Head of caudate nucleus (tissue), 42 donors: ENCODE measurements at regions of chr4 and their contacts with region 1.

Region 1: DNA sequence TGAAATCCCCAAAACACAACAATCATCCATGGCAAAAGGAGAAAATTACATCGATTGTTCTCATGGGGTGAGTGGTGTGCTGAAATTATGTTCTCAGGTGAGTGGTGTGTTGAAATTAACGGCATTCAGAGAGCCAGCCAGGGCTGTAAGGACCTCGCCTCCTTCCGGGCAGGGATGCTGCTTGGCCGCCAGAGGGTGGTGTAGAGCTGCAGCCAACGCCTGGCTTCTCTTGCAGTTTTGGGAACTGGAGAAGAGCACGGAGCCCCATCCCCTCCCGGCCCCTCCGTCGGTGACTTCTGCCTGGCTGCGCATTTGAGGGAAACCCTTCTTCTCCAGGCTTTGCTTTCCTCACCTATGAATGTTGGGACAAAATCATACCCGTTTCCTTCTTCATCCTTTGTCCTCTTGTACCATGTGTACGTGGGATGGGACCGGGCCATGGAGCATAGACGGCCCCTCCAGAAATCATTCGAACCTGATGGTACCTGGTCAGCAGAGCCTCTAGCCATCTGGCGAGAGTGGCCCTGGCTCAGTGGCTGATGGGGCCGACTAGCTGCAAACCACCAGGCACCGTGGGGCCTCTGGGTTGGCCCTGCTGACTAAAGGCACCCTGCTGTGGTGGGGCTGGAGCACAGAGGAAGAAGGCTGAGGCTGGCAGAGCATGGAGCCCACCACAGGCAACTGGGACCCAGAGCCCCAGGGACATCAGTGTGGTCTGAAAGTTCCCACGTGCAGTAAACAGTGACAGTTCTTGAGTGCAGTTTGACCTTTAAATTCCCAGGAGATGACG is 28.4 kb downstream of the TRMT44 start:
- DNase-seq: peak; percentile 58 to 85 (median 75)

Region 2: DNA sequence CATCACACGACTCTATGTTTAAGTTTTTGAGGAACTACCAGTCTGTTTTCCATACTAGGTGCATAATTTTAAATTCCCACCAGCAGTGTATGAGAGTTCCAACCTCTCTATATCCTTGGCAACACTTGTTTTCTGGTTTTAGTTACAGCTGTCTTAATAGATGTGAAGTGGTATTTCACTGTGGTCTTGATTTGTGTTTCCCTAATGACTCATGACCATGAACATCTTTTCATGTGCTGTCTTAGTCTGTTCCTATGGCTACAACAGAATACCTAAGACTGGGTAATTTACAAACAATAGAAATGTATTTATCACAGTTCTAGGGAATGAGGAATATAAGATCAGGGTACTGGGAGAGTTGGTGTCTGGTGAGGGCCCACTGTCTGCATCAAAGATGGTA is 59.8 kb after region 1 on chr4:
- intact Hi-C with region 1: no loop called
- DNase-seq: no peak

Region 3: DNA sequence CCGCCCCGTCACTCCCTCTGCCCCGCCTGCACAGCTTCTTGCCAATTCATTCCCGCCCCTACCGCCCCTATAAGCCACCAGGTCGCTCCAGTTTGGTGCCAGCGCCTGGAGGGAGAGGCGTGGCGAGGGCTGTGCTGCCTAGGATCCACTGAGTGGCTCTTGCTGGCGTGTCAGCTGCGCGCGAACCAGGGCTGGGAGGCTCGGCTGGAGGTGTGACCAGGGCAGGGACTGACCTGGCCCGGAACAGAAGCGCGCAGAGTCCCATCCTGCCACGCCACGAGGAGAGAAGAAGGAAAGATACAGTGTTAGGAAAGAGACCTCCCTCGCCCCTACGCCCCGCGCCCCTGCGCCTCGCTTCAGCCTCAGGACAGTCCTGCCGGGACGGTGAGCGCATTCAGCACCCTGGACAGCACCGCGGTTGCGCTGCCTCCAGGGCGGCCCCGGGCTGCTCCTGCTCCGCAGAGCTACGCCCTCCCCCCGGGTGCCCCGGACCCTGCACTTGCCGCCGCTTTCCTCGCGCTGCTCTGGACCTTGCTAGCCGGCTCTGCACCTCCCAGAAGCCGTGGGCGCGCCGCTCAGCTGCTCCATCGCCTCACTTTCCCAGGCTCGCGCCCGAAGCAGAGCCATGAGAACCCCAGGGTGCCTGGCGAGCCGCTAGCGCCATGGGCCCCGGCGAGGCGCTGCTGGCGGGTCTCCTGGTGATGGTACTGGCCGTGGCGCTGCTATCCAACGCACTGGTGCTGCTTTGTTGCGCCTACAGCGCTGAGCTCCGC is 111.6 kb after region 1 on chr4 and contains the start of gene GPR78:
- intact Hi-C with region 1: loop called (anchors 10 kb)
- DNase-seq: peak in 16 of 42 donors; percentile 7 to 62 (median 28)